ENCODE measurements at regions of chr18 and their contacts with region 1.

Region 1: GRCh38 chr18:60189856-60190255 is 182.7 kb downstream of the MC4R start:
- DNase-seq: no peak
- H3K4me3 ChIP-seq: no peak overlapping the region
- H3K27ac ChIP-seq: no peak overlapping the region
- H3K4me1 ChIP-seq: no peaks in the 10 kb centered on the region
- H3K27me3 ChIP-seq: no peaks in the 10 kb centered on the region
- CTCF ChIP-seq: no peak
- POLR2A ChIP-seq: no peak

Region 2: DNA sequence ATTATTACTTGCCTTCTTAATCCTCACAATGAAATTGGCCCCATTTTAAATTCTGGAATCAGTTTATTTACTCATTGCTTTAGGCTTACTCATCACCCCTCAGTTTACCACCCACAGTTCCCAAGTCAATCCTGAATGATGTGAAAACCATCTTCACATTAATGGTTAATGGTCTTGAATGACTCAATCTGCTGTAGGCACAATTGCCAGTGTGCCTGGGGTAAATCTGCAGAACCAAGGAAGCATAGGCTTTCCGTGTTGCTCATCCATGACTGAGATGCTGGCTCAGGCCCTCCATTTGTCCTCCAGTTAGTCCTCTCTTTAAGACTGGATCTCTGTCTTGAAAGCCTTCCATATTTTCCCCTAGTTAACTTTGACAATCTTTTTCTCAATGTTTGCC is 125.6 kb before region 1 on chr18:
- intact Hi-C with region 1: loop called (anchors 5 kb)
- DNase-seq: no peak
- H3K4me3 ChIP-seq: no peak overlapping the region
- H3K27ac ChIP-seq: no peak overlapping the region
- H3K4me1 ChIP-seq: no peaks in the 10 kb centered on the region
- H3K27me3 ChIP-seq: no peaks in the 10 kb centered on the region
- CTCF ChIP-seq: no peak
- POLR2A ChIP-seq: no peak